ENCODE measurements at regions of chr13 and their contacts with region 1.

Region 1: GRCh38 chr13:23375001-23375971 is 58.2 kb downstream of the SACS start:
- DNase-seq: peak; percentile 86 to 96 (median 92)
- ATAC-seq: peak; percentile 95
- H3K4me3 ChIP-seq: peak overlapping the region; percentile 48
- H3K4me3 Mint-ChIP-seq: peak overlapping the region; percentile 71 to 82 (median 77)
- H3K27ac ChIP-seq: peak overlapping the region; percentile 75
- H3K27ac Mint-ChIP-seq: peak overlapping the region in 8 of 9 donors; percentile 44 to 94 (median 78)
- H3K4me1 ChIP-seq: peaks cover 21 to 26% of the 10 kb centered on the region in 2 donors
- H3K4me1 Mint-ChIP-seq: peaks cover 22 to 70% (median 67%) of the 10 kb centered on the region in 7 donors
- H3K27me3 ChIP-seq: no peaks in the 10 kb centered on the region
- H3K27me3 Mint-ChIP-seq: no peaks in the 10 kb centered on the region

Region 2: DNA sequence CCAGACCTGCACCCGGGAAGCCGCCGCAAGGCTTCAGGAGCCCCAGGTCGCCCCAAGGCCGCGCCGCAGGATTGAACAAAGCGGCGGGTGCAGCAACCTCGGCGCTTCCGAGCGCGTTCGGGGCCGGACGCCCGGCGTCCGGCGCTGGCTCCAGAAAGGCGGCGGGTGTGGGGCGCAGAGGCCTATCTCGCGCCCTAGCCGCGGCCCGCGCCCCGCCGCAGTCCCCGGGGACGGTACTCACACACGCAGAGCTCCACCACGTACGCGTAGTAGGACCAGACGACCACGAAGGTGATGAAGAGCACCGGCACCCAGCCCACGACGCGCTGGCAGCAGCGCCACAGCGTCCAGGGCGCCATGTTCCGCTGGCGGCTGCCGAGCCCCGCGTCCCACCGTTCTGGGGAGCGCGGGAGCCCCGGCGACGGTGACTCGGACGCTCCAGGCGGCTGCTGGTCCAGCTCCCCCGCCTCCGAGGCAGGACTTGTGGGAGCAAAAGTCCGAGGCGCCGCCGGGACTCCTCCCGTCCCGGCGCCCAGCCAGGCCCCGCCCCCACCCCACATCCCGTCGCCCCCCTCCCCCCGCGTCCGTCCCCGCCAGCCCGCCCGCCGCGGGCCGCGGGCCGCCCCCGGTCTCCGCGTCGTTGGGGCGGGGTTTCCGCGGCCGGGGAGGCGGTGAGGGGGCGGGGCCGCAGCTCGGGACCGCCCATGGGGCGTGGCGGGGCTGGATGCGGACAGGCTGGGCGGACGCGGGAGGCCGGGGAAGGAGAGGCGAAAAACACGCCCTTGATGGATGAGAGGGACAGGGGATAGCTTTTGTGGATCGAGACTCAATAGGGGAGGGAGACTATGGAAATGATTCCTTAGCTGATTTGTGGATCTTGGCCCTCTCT is 1916.2 kb before region 1 on chr13 and contains the start of gene ZDHHC20:
- CTCF ChIA-PET with region 1: no interaction called
- POLR2A ChIA-PET with region 1: no interaction called
- intact Hi-C with region 1: loop called in 1 of 2 experiments (anchors 1 kb)
- DNase-seq: peak; percentile 75 to 99 (median 88)
- ATAC-seq: peak; percentile 98
- H3K4me3 ChIP-seq: peak within 1 kb of the TSS; percentile 90
- H3K4me3 Mint-ChIP-seq: peak within 1 kb of the TSS; percentile 91 to 97 (median 94)
- H3K27ac ChIP-seq: peak within 1 kb of the TSS; percentile 97
- H3K27ac Mint-ChIP-seq: peak within 1 kb of the TSS; percentile 74 to 98 (median 94)
- H3K4me1 ChIP-seq: peaks cover 9 to 19% of the 10 kb centered on the region in 2 donors
- H3K4me1 Mint-ChIP-seq: peaks cover 27 to 55% (median 42%) of the 10 kb centered on the region in 7 donors
- H3K27me3 ChIP-seq: no peaks in the 10 kb centered on the region
- H3K27me3 Mint-ChIP-seq: peaks cover 0 to 7% (median 0%) of the 10 kb centered on the region in 5 donors
- total RNA-seq, gene ZDHHC20: 60.8 to 89.9 (median 71.7) TPM

Region 3: DNA sequence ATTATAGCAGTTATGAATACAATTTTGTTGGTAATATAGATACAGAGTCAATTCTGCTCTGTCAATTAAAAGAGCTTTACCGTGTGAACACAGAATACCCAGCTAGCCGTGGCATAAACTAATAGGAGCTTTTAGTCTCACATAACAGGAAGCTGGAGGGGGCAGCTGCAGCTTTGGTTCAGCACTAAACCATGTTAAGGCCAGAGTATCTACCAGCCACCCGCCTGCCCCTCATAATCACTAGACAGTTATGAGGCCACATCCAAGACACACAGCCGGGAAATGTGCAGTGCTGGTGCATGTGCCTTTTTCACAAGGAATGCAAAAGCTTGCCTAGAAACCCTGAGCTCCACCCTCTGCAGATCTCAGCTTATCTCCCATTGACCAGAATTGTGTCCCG is 132.2 kb before region 1 on chr13:
- CTCF ChIA-PET with region 1: no interaction called
- POLR2A ChIA-PET with region 1: no interaction called
- intact Hi-C with region 1: no loop called
- DNase-seq: no peak
- ATAC-seq: no peak
- H3K4me3 ChIP-seq: no peak overlapping the region
- H3K4me3 Mint-ChIP-seq: no peak overlapping the region
- H3K27ac ChIP-seq: no peak overlapping the region
- H3K27ac Mint-ChIP-seq: no peak overlapping the region
- H3K4me1 ChIP-seq: no peaks in the 10 kb centered on the region
- H3K4me1 Mint-ChIP-seq: no peaks in the 10 kb centered on the region
- H3K27me3 ChIP-seq: no peaks in the 10 kb centered on the region
- H3K27me3 Mint-ChIP-seq: peaks cover 3 to 16% (median 10%) of the 10 kb centered on the region in 5 donors

Region 4: DNA sequence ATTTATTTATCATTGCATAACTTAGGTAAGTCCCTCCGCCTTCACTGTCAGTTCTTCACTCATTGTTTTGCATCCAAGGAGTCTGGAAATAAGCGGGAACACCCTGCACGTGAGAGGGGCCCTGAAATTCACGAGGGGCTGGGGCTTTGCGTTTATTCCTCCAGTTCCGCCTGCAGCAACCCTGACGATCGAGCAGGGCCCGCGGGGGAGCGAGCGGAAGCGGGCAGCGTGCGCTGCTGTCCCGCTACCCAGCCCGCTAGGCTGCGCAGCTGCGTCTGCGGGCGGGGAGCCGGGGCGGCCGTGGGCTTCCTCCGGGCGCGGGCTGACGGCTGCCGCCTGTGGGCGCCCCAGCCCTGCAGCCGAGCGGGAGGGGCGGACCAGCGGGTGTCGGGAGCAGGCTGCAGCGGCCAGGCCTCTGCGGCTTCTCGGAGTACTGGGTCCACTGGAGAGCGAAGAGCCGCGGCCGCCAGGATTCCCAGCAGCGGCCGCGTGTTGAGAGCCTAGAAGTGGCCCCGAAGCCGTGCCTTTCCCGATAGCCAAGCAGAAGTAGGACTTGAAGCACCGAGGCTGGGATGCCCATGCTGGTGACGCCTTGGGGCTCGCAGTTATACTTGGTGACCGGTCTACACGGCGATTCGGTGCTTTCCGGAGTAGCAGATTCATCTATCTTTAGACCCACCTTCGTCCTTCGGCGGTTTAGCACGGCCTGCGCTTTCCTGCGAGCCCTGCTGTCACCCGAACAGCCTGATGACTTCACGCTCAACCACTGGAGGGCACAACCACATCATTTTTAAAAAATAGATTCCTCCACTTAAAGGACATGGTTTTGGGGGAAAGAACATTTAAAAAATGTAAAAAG is 91.1 kb after region 1 on chr13:
- CTCF ChIA-PET with region 1: no interaction called
- POLR2A ChIA-PET with region 1: no interaction called
- intact Hi-C with region 1: loop called (anchors 1 to 5 kb)
- DNase-seq: peak; percentile 38 to 69 (median 65)
- ATAC-seq: peak; percentile 94
- H3K4me3 ChIP-seq: peak overlapping the region; percentile 65
- H3K4me3 Mint-ChIP-seq: peak overlapping the region; percentile 79 to 89 (median 84)
- H3K27ac ChIP-seq: no peak overlapping the region
- H3K27ac Mint-ChIP-seq: peak overlapping the region in 4 of 9 donors; percentile 45 to 69 (median 61)
- H3K4me1 ChIP-seq: peaks cover 0 to 4% of the 10 kb centered on the region in 2 donors
- H3K4me1 Mint-ChIP-seq: peaks cover 0 to 8% (median 4%) of the 10 kb centered on the region in 7 donors
- H3K27me3 ChIP-seq: no peaks in the 10 kb centered on the region
- H3K27me3 Mint-ChIP-seq: peaks cover 0 to 46% (median 6%) of the 10 kb centered on the region in 5 donors

Region 5: DNA sequence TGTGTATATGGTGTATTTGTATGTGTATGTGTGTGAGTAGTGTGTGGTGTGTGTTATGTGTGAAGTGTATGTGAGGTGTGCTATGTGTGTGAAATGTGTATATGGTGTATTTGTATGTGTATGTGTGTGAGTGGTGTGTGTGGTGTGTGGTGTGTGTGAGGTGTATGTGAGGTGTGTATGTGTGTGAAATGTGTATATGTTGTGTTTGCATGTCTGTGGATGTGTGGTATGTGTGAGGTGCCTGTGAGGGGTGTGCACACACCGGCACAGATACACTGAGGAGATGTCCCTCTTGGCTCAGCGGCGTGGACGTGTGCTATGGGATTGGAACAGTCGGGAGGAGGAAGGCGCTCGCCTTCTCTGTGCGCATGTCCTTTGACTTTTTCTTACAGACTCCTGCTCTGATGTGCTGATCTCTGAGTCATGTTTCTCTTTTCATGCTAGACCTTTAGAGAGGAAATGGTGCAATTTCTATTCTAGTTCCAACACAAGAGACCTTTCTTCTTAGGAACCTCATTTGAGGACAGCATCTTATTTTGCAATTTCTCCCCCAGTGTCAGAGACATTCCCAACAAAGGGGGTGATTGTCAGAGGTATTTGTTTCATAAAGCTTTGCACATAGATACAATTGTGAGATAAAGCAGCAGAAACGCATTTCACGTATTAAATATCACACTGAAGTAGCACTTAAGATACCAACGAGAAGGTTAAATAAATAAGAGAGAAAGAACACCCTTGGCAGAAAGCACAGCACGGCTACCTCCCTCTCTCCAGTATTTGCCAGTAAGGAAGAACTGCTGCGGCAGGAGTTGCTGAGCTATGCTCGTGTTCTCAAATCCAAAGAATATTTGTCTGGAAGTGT is 183.6 kb after region 1 on chr13:
- CTCF ChIA-PET with region 1: no interaction called
- POLR2A ChIA-PET with region 1: no interaction called
- intact Hi-C with region 1: no loop called
- DNase-seq: no peak
- ATAC-seq: peak; percentile 53
- H3K4me3 ChIP-seq: no peak overlapping the region
- H3K4me3 Mint-ChIP-seq: no peak overlapping the region
- H3K27ac ChIP-seq: no peak overlapping the region
- H3K27ac Mint-ChIP-seq: no peak overlapping the region
- H3K4me1 ChIP-seq: no peaks in the 10 kb centered on the region
- H3K4me1 Mint-ChIP-seq: no peaks in the 10 kb centered on the region
- H3K27me3 ChIP-seq: no peaks in the 10 kb centered on the region
- H3K27me3 Mint-ChIP-seq: peaks cover 5 to 25% (median 19%) of the 10 kb centered on the region in 5 donors

Region 6: GRCh38 chr13:23888658-23889614 is 513.6 kb after region 1 on chr13 and contains the start of gene MIPEP:
- CTCF ChIA-PET with region 1: no interaction called
- POLR2A ChIA-PET with region 1: interaction called, 3 read pairs
- intact Hi-C with region 1: loop called (anchors 1 kb)
- DNase-seq: peak; percentile 68 to 94 (median 83)
- ATAC-seq: peak; percentile 98
- H3K4me3 ChIP-seq: peak within 1 kb of the TSS; percentile 88
- H3K4me3 Mint-ChIP-seq: peak within 1 kb of the TSS; percentile 85 to 96 (median 92)
- H3K27ac ChIP-seq: peak within 1 kb of the TSS; percentile 70
- H3K27ac Mint-ChIP-seq: peak within 1 kb of the TSS; percentile 72 to 92 (median 84)
- H3K4me1 ChIP-seq: peaks cover 0 to 5% of the 10 kb centered on the region in 2 donors
- H3K4me1 Mint-ChIP-seq: peaks cover 12 to 31% (median 25%) of the 10 kb centered on the region in 7 donors
- H3K27me3 ChIP-seq: no peaks in the 10 kb centered on the region
- H3K27me3 Mint-ChIP-seq: no peaks in the 10 kb centered on the region
- total RNA-seq, gene MIPEP: 8.0 to 10.5 (median 9.2) TPM

Region 7: GRCh38 chr13:24220086-24220703 is 844.9 kb after region 1 on chr13:
- CTCF ChIA-PET with region 1: no interaction called
- POLR2A ChIA-PET with region 1: no interaction called
- intact Hi-C with region 1: loop called in 1 of 2 experiments (anchors 10 kb)
- DNase-seq: peak in 7 of 9 donors; percentile 59 to 77 (median 70)
- ATAC-seq: peak; percentile 88
- H3K4me3 ChIP-seq: no peak overlapping the region
- H3K4me3 Mint-ChIP-seq: no peak overlapping the region
- H3K27ac ChIP-seq: no peak overlapping the region
- H3K27ac Mint-ChIP-seq: peak overlapping the region in 2 of 9 donors; percentile 10 to 50
- H3K4me1 ChIP-seq: peaks cover 0 to 7% of the 10 kb centered on the region in 2 donors
- H3K4me1 Mint-ChIP-seq: peaks cover 7 to 44% (median 22%) of the 10 kb centered on the region in 7 donors
- H3K27me3 ChIP-seq: no peaks in the 10 kb centered on the region
- H3K27me3 Mint-ChIP-seq: no peaks in the 10 kb centered on the region

Region 8: GRCh38 chr13:24512197-24512907 is 1137.1 kb after region 1 on chr13 and contains the start of gene PARP4:
- CTCF ChIA-PET with region 1: no interaction called
- POLR2A ChIA-PET with region 1: no interaction called
- intact Hi-C with region 1: loop called in 1 of 2 experiments (anchors 5 kb)
- DNase-seq: peak; percentile 49 to 74 (median 68)
- ATAC-seq: peak; percentile 85
- H3K4me3 ChIP-seq: peak within 1 kb of the TSS; percentile 95
- H3K4me3 Mint-ChIP-seq: peak within 1 kb of the TSS; percentile 88 to 96 (median 92)
- H3K27ac ChIP-seq: peak within 1 kb of the TSS; percentile 67
- H3K27ac Mint-ChIP-seq: peak within 1 kb of the TSS; percentile 68 to 93 (median 88)
- H3K4me1 ChIP-seq: peaks cover 3 to 7% of the 10 kb centered on the region in 2 donors
- H3K4me1 Mint-ChIP-seq: peaks cover 22 to 51% (median 41%) of the 10 kb centered on the region in 7 donors
- H3K27me3 ChIP-seq: no peaks in the 10 kb centered on the region
- H3K27me3 Mint-ChIP-seq: peaks cover 0 to 4% (median 0%) of the 10 kb centered on the region in 5 donors
- total RNA-seq, gene PARP4: 33.4 to 71.1 (median 65.4) TPM

Region 9: GRCh38 chr13:25301347-25302047 is 1926.2 kb after region 1 on chr13 and contains the start of gene NUP58:
- CTCF ChIA-PET with region 1: no interaction called
- POLR2A ChIA-PET with region 1: no interaction called
- intact Hi-C with region 1: loop called (anchors 1 to 10 kb)
- DNase-seq: peak; percentile 83 to 94 (median 92)
- ATAC-seq: peak; percentile 99
- H3K4me3 ChIP-seq: peak within 1 kb of the TSS; percentile 64
- H3K4me3 Mint-ChIP-seq: peak within 1 kb of the TSS; percentile 86 to 95 (median 92)
- H3K27ac ChIP-seq: peak within 1 kb of the TSS; percentile 93
- H3K27ac Mint-ChIP-seq: peak within 1 kb of the TSS; percentile 87 to 97 (median 93)
- H3K4me1 ChIP-seq: peaks cover 13 to 22% of the 10 kb centered on the region in 2 donors
- H3K4me1 Mint-ChIP-seq: peaks cover 21 to 51% (median 47%) of the 10 kb centered on the region in 7 donors
- H3K27me3 ChIP-seq: peaks cover 0 to 5% of the 10 kb centered on the region in 2 donors
- H3K27me3 Mint-ChIP-seq: peaks cover 7 to 19% (median 10%) of the 10 kb centered on the region in 5 donors
- total RNA-seq, gene NUP58: 41.1 to 89.1 (median 57.0) TPM

Measured in naive thymus-derived CD4-positive, alpha-beta T cell (primary cell).